ENCODE measurements at regions of chr20 and their contacts with region 1.

Region 1: GRCh38 chr20:61907081-61907891 is 158.4 kb downstream of the TAF4 start:
- DNase-seq: no peak
- ATAC-seq: no peak
- H3K4me3 ChIP-seq: no peak overlapping the region
- H3K27ac ChIP-seq: no peak overlapping the region
- H3K4me1 ChIP-seq: peaks cover 15% of the 10 kb centered on the region
- H3K27me3 ChIP-seq: no peaks in the 10 kb centered on the region
- CTCF ChIP-seq: no peak
- EP300 ChIP-seq: no peak
- POLR2A ChIP-seq: no peak
- RAD21 ChIP-seq: no peak

Region 2: GRCh38 chr20:61855286-61855685 is 52.0 kb before region 1 on chr20:
- CTCF ChIA-PET with region 1: no interaction called
- POLR2A ChIA-PET with region 1: no interaction called
- RAD21 ChIA-PET with region 1: no interaction called
- SMC1A ChIA-PET with region 1: no interaction called
- in situ Hi-C with region 1: loop called (anchors 5 kb)
- intact Hi-C with region 1: no loop called
- DNase-seq: no peak
- ATAC-seq: no peak
- H3K4me3 ChIP-seq: no peak overlapping the region
- H3K27ac ChIP-seq: no peak overlapping the region
- H3K4me1 ChIP-seq: no peaks in the 10 kb centered on the region
- H3K27me3 ChIP-seq: no peaks in the 10 kb centered on the region; a peak in 1 of 4 replicates
- CTCF ChIP-seq: no peak
- EP300 ChIP-seq: no peak
- POLR2A ChIP-seq: no peak
- RAD21 ChIP-seq: no peak

Region 3: DNA sequence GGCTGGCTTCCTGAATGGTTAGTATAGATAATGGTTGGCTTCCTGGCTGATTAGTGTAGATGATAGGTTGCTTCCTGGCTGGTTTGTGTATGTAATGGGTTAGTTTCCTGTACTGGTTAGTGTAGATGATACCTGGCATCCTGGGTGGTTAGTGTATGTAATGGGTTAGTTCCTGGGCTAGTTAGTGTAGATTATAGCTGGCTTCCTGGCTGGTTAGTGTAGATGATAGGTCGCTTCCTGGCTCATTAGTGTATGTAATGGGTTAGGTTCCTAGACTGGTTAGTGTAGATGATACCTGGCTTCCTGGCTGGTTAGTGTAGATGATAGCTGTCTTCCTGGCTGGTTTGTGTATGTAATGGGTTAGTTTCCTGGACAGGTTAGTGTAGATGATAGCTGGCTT is 41.9 kb before region 1 on chr20:
- CTCF ChIA-PET with region 1: no interaction called
- POLR2A ChIA-PET with region 1: no interaction called
- RAD21 ChIA-PET with region 1: no interaction called
- SMC1A ChIA-PET with region 1: no interaction called
- in situ Hi-C with region 1: no loop called
- intact Hi-C with region 1: no loop called
- DNase-seq: no peak
- ATAC-seq: no peak
- H3K4me3 ChIP-seq: no peak overlapping the region
- H3K27ac ChIP-seq: no peak overlapping the region
- H3K4me1 ChIP-seq: no peaks in the 10 kb centered on the region
- H3K27me3 ChIP-seq: no peaks in the 10 kb centered on the region
- CTCF ChIP-seq: no peak
- EP300 ChIP-seq: no peak
- POLR2A ChIP-seq: no peak
- RAD21 ChIP-seq: no peak

Region 4: DNA sequence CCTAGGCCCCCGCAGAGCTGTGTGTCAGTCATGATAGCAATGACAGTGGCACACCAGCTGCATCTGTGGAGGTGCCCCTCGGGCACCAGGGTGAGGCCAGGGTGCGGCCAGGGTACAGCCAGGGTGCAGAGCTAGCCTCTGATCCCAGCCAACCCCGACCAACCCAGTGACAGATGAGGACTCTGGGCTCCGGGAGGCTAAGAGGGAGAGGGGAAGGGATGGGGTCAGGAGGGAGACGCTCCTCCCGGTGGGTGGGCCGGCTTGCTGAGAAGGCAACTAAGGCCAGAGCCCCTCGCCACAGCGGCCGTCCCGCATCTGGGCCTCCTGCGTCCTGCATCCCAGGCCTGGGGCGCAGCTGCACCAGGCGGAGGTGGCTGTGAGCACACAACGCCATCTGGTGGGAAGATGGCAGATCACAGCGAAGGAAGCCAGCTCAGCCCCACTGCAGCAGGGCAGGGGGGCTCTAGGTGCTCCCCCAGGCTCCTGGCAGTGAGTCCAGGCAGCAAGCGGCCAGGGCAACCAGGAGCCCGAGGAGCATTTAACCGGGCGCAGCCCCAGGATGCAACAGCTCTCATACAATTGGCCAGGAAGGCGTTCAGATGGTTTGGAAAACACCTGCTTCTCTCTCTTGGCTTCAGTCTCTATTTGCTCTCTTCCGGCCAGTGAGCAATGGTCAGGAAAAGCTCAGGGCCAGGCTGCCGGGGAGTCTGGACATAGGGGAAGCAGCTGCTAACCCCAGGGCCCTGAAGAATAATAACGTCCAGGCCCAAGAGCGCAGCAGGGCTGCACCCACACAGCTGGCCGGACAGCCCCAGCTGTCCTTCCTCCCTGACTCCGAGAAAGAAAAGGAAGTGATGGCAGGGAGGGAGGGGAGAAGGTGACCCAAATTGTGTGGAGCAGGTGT is 11.0 kb before region 1 on chr20:
- CTCF ChIA-PET with region 1: interaction called, 18 read pairs
- POLR2A ChIA-PET with region 1: no interaction called
- RAD21 ChIA-PET with region 1: interaction called, 3 read pairs
- SMC1A ChIA-PET with region 1: interaction called, 3 read pairs
- in situ Hi-C with region 1: no loop called
- intact Hi-C with region 1: no loop called
- DNase-seq: no peak
- ATAC-seq: peak; percentile 99
- H3K4me3 ChIP-seq: no peak overlapping the region
- H3K27ac ChIP-seq: no peak overlapping the region
- H3K4me1 ChIP-seq: no peaks in the 10 kb centered on the region
- H3K27me3 ChIP-seq: no peaks in the 10 kb centered on the region
- CTCF ChIP-seq: peak; percentile 69 to 86 (median 85)
- EP300 ChIP-seq: no peak
- POLR2A ChIP-seq: no peak
- RAD21 ChIP-seq: peak; percentile 75

Measured in GM12878 (cell line).